K562 (cell line): ENCODE measurements at regions of chr10 and their contacts with region 1.

Region 1: GRCh38 chr10:77641788-77642397 is 4.3 kb upstream of the KCNMA1 start:
- DNase-seq: peak; percentile 71 to 81 (median 73)
- ATAC-seq: peak; percentile 81
- H3K4me3 ChIP-seq: no peak overlapping the region
- H3K27ac ChIP-seq: no peak overlapping the region
- H3K4me1 ChIP-seq: no peaks in the 10 kb centered on the region
- H3K27me3 ChIP-seq: peaks cover 6 to 19% of the 10 kb centered on the region in 2 experiments; a peak in 3 of 5 replicates
- CTCF ChIP-seq: peak; percentile 84 to 97 (median 85)
- EP300 ChIP-seq: no peak
- POLR2A ChIP-seq: no peak
- RAD21 ChIP-seq: peak; percentile 93 to 94

Region 2: DNA sequence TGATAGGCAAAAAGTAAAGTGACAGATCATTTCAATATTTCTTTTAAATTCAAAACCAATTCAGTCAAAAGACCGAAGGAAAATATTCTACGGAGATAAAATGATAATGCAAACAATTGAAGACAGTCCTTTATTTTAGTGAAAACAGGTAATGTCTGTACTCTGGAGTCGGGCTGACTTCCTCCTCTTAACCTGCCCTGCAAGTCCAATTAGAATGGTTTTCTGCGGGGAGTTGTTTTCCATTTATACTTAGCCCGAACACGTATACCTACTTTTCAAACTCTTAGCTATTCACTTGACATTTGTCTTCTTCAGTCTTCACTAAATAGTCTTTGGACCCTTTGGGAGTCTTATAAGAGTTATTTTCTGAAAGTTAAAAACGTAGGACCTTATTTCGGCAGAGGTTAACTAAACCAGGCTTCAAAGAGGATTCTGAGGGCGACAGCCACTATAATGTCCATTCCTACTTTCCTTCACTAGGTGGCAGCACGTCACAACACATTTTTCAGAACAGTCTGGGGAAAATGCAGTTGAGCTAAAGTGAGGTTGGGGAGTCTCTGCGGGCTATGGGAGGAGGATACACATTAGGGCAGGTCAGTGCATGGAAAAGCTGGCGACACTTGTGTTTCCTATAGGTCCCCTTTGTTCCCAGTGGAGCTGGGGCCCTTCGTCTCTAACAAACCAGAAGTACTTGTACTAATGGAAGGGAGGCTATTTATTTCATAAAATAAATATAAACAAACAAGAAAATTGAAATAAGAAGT is 476.3 kb before region 1 on chr10:
- CTCF ChIA-PET with region 1: interaction called, 12 read pairs
- POLR2A ChIA-PET with region 1: no interaction called
- in situ Hi-C with region 1: loop called (anchors 5 kb)
- intact Hi-C with region 1: loop called (anchors 2 kb)
- DNase-seq: peak; percentile 49 to 69 (median 56)
- ATAC-seq: peak; percentile 94
- H3K4me3 ChIP-seq: no peak overlapping the region
- H3K27ac ChIP-seq: no peak overlapping the region
- H3K4me1 ChIP-seq: no peaks in the 10 kb centered on the region
- H3K27me3 ChIP-seq: no peaks in the 10 kb centered on the region
- CTCF ChIP-seq: peak; percentile 75 to 85 (median 80)
- EP300 ChIP-seq: no peak
- POLR2A ChIP-seq: no peak
- RAD21 ChIP-seq: peak; percentile 57 to 79

Region 3: DNA sequence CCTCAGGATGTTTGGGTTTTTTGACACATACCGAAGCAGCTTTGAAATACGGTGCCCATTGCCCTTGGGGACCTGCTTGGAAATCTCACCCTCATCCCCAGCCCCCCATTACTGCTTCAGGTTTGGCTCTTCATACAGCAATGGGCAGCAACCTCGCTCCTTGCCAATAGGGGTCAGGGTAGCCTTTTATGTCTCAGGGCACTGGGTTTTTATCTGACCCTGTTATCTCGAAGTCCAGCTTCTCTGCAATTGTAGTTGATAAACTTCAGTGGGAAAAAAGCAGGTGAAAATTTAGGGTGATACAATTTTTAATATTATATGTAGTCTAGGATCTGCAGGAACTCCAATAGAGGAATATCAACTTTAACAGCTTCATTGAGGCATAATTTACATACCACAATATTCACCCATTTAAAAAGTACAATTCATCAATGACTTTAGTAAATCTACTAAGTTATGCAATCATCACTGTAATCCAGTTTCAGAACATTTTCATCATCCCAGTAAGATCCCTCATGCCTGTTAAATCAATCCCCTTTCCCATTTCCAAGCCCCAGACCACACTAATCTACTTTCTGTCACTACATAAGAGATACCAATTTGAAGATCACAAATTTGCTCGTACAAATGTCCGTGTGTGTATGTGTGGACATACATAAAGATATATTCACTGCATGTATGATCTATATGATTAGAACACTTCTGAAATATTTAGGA is 390.4 kb before region 1 on chr10:
- CTCF ChIA-PET with region 1: interaction called, 4 read pairs
- POLR2A ChIA-PET with region 1: no interaction called
- in situ Hi-C with region 1: no loop called
- intact Hi-C with region 1: loop called (anchors 5 kb)
- DNase-seq: peak; percentile 26 to 37 (median 32)
- ATAC-seq: peak; percentile 75
- H3K4me3 ChIP-seq: no peak overlapping the region
- H3K27ac ChIP-seq: no peak overlapping the region
- H3K4me1 ChIP-seq: no peaks in the 10 kb centered on the region; a peak in 1 of 5 replicates
- H3K27me3 ChIP-seq: no peaks in the 10 kb centered on the region
- CTCF ChIP-seq: peak; percentile 56 to 66 (median 59)
- EP300 ChIP-seq: no peak
- POLR2A ChIP-seq: no peak
- RAD21 ChIP-seq: peak; percentile 40 to 55

Region 4: GRCh38 chr10:77494327-77494726 is 147.6 kb before region 1 on chr10:
- CTCF ChIA-PET with region 1: interaction called, 7 read pairs
- POLR2A ChIA-PET with region 1: interaction called, 3 read pairs
- in situ Hi-C with region 1: no loop called
- intact Hi-C with region 1: loop called (anchors 10 kb)
- DNase-seq: peak in 1 of 4 experiments; percentile 11
- ATAC-seq: peak; percentile 51
- H3K4me3 ChIP-seq: no peak overlapping the region
- H3K27ac ChIP-seq: no peak overlapping the region
- H3K4me1 ChIP-seq: no peaks in the 10 kb centered on the region
- H3K27me3 ChIP-seq: peaks cover 4 to 17% of the 10 kb centered on the region in 2 experiments; a peak in 2 of 5 replicates
- CTCF ChIP-seq: peak in 2 of 3 experiments; percentile 31 to 42; a peak in 2 of 6 replicates
- EP300 ChIP-seq: no peak
- POLR2A ChIP-seq: no peak
- RAD21 ChIP-seq: peak; percentile 39 to 47

Region 5: DNA sequence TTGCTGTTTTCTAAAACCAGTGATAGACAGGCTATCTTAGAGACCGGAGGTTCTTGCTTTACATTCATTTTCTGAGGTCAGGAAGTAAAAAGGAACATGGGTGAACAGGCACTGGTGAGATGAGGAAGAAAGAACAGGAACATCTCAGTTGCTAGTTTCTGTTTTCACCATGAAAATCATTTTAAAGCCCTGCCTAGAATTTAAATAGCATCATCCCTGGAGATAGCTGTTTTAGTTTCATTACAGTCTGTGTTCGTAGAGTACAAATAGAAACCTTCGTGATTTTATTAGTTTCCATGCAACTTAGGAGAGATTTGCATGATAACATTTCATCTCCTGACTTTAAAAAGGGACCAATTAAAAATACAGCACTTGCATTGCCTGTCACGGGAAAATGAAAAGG is 19.0 kb before region 1 on chr10:
- CTCF ChIA-PET with region 1: no interaction called
- POLR2A ChIA-PET with region 1: no interaction called
- in situ Hi-C with region 1: no loop called
- intact Hi-C with region 1: no loop called
- DNase-seq: no peak
- ATAC-seq: no peak
- H3K4me3 ChIP-seq: no peak overlapping the region
- H3K27ac ChIP-seq: no peak overlapping the region
- H3K4me1 ChIP-seq: no peaks in the 10 kb centered on the region
- H3K27me3 ChIP-seq: peaks cover 11 to 18% of the 10 kb centered on the region in 2 experiments; a peak in 3 of 5 replicates
- CTCF ChIP-seq: no peak
- EP300 ChIP-seq: no peak
- POLR2A ChIP-seq: no peak
- RAD21 ChIP-seq: no peak

Region 6: DNA sequence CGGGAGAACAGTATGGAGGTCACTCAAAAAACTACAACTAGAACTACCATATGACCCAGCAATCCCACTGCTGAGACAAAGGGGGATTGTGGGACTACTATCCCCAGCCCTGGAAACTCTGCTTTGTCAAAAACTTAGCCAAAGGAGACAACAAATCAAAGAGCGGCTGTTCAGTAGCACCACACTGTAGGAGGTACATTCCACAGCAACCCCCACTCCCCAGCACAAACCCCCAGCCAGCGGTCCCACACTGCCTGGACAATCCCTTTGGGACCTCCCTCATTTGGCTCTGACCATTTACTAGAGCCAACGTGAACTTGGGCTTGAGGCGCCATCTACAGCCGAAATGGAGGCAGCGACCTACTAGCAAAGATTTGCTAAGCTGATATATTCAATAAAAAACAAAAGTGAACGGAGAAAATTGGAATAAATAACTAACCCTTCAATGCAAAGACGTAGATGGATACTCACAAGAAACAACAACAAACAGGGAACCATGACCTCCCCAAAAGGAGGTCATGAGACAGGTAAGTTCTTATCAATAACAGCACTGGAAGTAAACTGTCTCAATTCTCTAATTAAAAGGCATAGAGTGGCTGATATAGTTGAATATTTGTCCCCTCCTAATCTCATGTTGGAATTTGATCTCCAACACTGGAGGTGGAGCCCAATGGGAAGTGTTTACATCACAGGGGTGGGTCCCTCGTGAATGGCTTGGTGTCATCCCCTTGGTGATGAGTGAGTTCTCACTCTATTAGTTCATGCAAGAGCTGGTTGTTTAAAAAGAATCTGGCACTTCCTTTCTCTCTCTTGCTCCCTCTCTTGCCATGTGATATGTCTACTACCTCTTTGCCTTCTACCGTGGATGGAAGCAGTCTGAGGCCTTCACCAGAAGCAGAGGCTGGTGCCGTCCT is 114.7 kb after region 1 on chr10:
- CTCF ChIA-PET with region 1: interaction called, 3 read pairs
- POLR2A ChIA-PET with region 1: no interaction called
- in situ Hi-C with region 1: no loop called
- intact Hi-C with region 1: loop called (anchors 2 kb)
- DNase-seq: peak; percentile 51 to 80 (median 64)
- ATAC-seq: peak; percentile 99
- H3K4me3 ChIP-seq: no peak overlapping the region
- H3K27ac ChIP-seq: no peak overlapping the region
- H3K4me1 ChIP-seq: no peaks in the 10 kb centered on the region
- H3K27me3 ChIP-seq: no peaks in the 10 kb centered on the region; a peak in 1 of 5 replicates
- CTCF ChIP-seq: peak; percentile 90 to 95 (median 91)
- EP300 ChIP-seq: no peak
- POLR2A ChIP-seq: no peak
- RAD21 ChIP-seq: peak; percentile 71 to 89

Region 7: GRCh38 chr10:77832238-77832637 is 190.3 kb after region 1 on chr10:
- CTCF ChIA-PET with region 1: no interaction called
- POLR2A ChIA-PET with region 1: no interaction called
- in situ Hi-C with region 1: no loop called
- intact Hi-C with region 1: no loop called
- DNase-seq: no peak
- ATAC-seq: no peak
- H3K4me3 ChIP-seq: no peak overlapping the region
- H3K27ac ChIP-seq: no peak overlapping the region
- H3K4me1 ChIP-seq: peaks cover 16 to 19% of the 10 kb centered on the region in 2 experiments
- H3K27me3 ChIP-seq: no peaks in the 10 kb centered on the region
- CTCF ChIP-seq: no peak
- EP300 ChIP-seq: no peak
- POLR2A ChIP-seq: no peak
- RAD21 ChIP-seq: no peak